Vagina (tissue), 2 donors: ENCODE measurements at regions of chr10 and their contacts with region 1.

Region 1: GRCh38 chr10:30587522-30588031 is 42.0 kb downstream of the LYZL2 start:
- DNase-seq: no peak
- H3K4me3 ChIP-seq: no peak overlapping the region
- H3K27ac ChIP-seq: no peak overlapping the region
- H3K4me1 ChIP-seq: peaks cover 5% of the 10 kb centered on the region
- H3K27me3 ChIP-seq: no peaks in the 10 kb centered on the region
- CTCF ChIP-seq: no peak
- POLR2A ChIP-seq: no peak

Region 2: DNA sequence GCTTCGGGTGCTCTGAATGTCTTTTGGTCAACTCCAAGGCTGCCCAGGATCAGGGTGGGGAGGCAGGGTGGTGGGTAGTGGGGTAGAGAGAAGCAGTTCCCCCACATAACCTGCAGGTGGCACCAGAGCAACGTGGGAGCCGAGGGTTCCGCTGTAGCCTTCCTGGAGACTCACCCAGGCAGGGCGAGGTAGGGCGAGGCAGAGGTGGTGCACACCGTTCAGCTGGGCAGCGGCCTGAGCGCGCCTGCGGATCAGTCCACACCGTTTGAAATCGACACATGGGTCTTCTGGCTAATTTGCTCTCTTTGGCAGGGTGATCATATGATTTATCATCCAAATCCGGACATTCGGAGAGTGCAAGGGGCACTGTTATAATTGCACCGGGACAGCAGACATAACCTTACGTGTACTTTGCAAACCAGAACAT is 195.0 kb before region 1 on chr10:
- intact Hi-C with region 1: loop called (anchors 5 kb)
- DNase-seq: no peak
- H3K4me3 ChIP-seq: peak overlapping the region in 1 of 2 donors; percentile 16
- H3K27ac ChIP-seq: no peak overlapping the region
- H3K4me1 ChIP-seq: no peaks in the 10 kb centered on the region
- H3K27me3 ChIP-seq: no peaks in the 10 kb centered on the region
- CTCF ChIP-seq: peak; percentile 57 to 93 (median 85)
- POLR2A ChIP-seq: no peak

Region 3: DNA sequence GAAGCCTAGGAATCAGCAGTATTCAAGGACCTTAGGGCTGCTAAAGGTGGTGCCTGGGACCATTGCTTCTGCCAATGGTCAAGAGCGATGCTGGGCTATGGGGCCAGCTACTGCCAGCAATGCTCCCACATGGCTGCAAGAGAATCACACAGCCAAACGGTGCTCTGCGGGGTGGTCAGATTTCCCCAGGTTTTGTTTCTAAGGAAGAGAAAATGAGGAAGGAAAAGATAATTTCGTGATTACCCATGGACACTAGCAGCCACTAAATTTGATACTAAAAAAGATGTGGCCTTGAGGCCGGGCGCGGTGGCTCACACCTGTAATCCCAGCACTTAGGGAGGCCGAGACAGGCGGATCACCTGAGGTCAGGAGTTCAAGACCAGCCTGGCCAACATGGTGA is 41.1 kb before region 1 on chr10:
- intact Hi-C with region 1: loop called (anchors 5 kb)
- DNase-seq: no peak
- H3K4me3 ChIP-seq: no peak overlapping the region
- H3K27ac ChIP-seq: no peak overlapping the region
- H3K4me1 ChIP-seq: no peaks in the 10 kb centered on the region
- H3K27me3 ChIP-seq: no peaks in the 10 kb centered on the region
- CTCF ChIP-seq: no peak
- POLR2A ChIP-seq: no peak

Region 4: GRCh38 chr10:30687698-30688219 is 100.2 kb after region 1 on chr10:
- intact Hi-C with region 1: no loop called
- DNase-seq: no peak
- H3K4me3 ChIP-seq: no peak overlapping the region
- H3K27ac ChIP-seq: no peak overlapping the region
- H3K4me1 ChIP-seq: peaks cover 4% of the 10 kb centered on the region
- H3K27me3 ChIP-seq: no peaks in the 10 kb centered on the region
- CTCF ChIP-seq: peak; percentile 37 to 80 (median 76)
- POLR2A ChIP-seq: no peak